ENCODE measurements at regions of chr6 and their contacts with region 1.

Region 1: DNA sequence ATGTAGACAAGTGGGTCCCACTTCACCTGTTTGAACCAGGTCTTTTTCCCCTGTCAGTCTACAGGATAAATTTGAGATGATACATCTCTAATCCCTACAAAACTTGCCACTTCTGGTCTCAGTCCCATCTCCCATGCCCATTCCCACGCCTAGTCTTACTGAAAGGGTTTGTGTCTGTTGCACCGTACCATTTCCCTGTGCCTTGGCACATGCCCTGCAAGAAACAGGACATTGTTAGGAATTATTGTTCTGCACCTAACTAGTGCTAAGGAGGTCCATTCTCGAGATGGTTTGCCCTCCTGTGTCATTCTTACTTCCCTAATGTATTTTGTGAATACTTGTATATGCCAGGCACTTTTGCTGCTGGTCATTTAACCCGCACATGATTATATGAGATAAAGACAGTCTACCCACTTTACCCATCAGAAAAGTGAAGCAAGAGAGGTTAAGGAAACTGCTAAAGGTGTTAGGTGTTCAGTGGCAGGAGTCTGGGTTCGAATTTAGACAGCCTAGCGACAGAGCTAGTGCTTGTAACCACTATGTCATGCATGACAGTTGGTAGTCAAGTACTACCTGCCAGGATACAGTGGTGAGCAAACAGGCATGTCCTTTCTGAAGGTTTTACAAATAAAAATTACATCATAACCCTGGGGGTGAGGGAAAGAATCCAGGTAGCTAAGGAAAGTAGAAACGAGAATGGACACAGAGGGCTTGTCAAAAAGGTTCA is 12.7 kb downstream of the FAM217A start:
- DNase-seq: no peak
- ATAC-seq: no peak
- H3K4me3 ChIP-seq: no peak overlapping the region
- H3K27ac ChIP-seq: no peak overlapping the region
- H3K4me1 ChIP-seq: peaks cover 2% of the 10 kb centered on the region
- H3K27me3 ChIP-seq: no peaks in the 10 kb centered on the region
- CTCF ChIP-seq: no peak
- POLR2A ChIP-seq: no peak
- RAD21 ChIP-seq: no peak

Region 2: GRCh38 chr6:3489027-3489757 is 577.0 kb before region 1 on chr6:
- CTCF ChIA-PET with region 1: no interaction called
- POLR2A ChIA-PET with region 1: no interaction called
- dilution Hi-C with region 1: no loop called
- in situ Hi-C with region 1: no loop called
- intact Hi-C with region 1: no loop called
- DNase-seq: peak; percentile 8
- ATAC-seq: no peak
- H3K4me3 ChIP-seq: no peak overlapping the region
- H3K27ac ChIP-seq: no peak overlapping the region
- H3K4me1 ChIP-seq: no peaks in the 10 kb centered on the region
- H3K27me3 ChIP-seq: peaks cover 55% of the 10 kb centered on the region
- CTCF ChIP-seq: no peak
- POLR2A ChIP-seq: no peak
- RAD21 ChIP-seq: no peak

Region 3: DNA sequence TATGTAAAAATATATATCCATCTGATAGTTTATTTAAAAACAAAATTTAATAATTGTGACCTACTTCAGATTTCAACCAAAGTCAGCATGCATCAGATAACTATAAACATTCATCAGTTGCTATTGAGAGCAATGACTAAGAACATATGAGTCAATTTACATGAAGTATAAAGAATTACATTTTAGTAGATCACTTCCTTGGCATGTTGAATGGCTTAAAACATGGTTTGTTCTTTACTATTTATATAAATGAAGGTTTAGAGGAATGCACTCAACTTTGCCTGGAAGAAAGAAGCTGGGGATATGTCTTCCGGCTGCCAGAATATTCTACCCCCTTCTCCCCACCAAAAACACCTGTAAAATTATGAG is 19.1 kb after region 1 on chr6:
- CTCF ChIA-PET with region 1: no interaction called
- POLR2A ChIA-PET with region 1: no interaction called
- dilution Hi-C with region 1: no loop called
- in situ Hi-C with region 1: no loop called
- intact Hi-C with region 1: loop called (anchors 1 kb)
- DNase-seq: peak; percentile 72
- ATAC-seq: peak; percentile 72
- H3K4me3 ChIP-seq: no peak overlapping the region
- H3K27ac ChIP-seq: no peak overlapping the region
- H3K4me1 ChIP-seq: peaks cover 4% of the 10 kb centered on the region; the same call in 1 of the 2 replicates
- H3K27me3 ChIP-seq: no peaks in the 10 kb centered on the region
- CTCF ChIP-seq: no peak
- POLR2A ChIP-seq: no peak
- RAD21 ChIP-seq: no peak

Region 4: DNA sequence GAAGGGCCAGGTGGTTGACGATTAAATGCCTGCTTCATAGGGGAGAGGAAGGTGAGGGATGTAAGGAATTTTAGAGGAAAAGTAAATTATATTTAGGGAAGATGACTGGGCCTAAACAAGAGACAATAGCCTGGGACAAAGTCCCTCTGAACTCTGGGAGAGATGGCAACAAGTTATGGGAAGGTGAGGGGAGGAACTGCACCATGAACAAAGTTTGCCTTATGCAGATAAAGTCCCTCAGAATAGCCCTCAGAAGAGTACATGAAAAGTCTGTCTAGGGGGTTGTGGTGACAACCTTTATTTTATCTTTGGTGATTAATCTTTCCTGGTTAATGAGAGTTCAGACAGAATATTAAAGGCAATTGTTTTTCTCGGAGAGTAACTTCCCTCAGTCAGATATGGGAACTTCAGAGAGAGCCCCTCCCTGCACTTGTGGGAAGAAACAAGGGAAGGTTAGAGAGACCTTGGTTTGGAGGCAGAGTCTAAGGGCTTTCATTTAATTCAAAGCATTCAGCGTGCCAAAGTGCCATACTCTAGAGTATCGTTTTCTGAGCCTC is 39.9 kb after region 1 on chr6:
- CTCF ChIA-PET with region 1: no interaction called
- POLR2A ChIA-PET with region 1: no interaction called
- dilution Hi-C with region 1: no loop called
- in situ Hi-C with region 1: no loop called
- intact Hi-C with region 1: loop called (anchors 5 kb)
- DNase-seq: no peak
- ATAC-seq: no peak
- H3K4me3 ChIP-seq: no peak overlapping the region
- H3K27ac ChIP-seq: no peak overlapping the region
- H3K4me1 ChIP-seq: no peaks in the 10 kb centered on the region
- H3K27me3 ChIP-seq: peaks cover 19% of the 10 kb centered on the region
- CTCF ChIP-seq: no peak
- POLR2A ChIP-seq: no peak
- RAD21 ChIP-seq: no peak

Region 5: DNA sequence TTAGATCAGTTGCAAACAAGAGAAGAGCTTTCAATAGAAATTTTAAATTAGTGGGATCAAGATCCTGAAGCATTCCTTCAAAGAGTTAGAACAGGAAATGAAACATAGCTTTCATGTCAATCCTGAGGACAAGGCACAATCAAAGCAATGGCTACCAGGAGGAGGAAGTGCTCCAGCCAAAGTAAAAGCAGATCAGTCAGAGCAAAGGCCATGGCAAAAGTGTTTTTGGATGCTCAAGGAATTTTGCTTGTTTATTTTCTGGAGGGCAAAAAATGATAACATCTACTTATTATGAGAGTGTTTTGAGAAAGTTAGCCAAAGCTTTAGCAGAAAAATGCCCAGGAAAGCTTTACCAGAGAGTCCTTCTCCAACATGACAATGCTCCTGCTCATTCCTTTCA is 130.2 kb after region 1 on chr6:
- CTCF ChIA-PET with region 1: no interaction called
- POLR2A ChIA-PET with region 1: no interaction called
- dilution Hi-C with region 1: no loop called
- in situ Hi-C with region 1: no loop called
- intact Hi-C with region 1: no loop called
- DNase-seq: no peak
- ATAC-seq: peak; percentile 53
- H3K4me3 ChIP-seq: no peak overlapping the region
- H3K27ac ChIP-seq: no peak overlapping the region
- H3K4me1 ChIP-seq: no peaks in the 10 kb centered on the region
- H3K27me3 ChIP-seq: no peaks in the 10 kb centered on the region
- CTCF ChIP-seq: no peak
- POLR2A ChIP-seq: no peak
- RAD21 ChIP-seq: no peak